ENCODE measurements at regions of chr3 and their contacts with region 1.

Region 1: GRCh38 chr3:112437146-112438022 is 61.9 kb downstream of the BTLA start:
- DNase-seq: peak; percentile 20
- H3K4me3 Mint-ChIP-seq: no peak overlapping the region
- H3K27ac Mint-ChIP-seq: peak overlapping the region; percentile 62
- H3K4me1 Mint-ChIP-seq: peaks cover 52% of the 10 kb centered on the region
- H3K27me3 Mint-ChIP-seq: no peaks in the 10 kb centered on the region

Region 2: DNA sequence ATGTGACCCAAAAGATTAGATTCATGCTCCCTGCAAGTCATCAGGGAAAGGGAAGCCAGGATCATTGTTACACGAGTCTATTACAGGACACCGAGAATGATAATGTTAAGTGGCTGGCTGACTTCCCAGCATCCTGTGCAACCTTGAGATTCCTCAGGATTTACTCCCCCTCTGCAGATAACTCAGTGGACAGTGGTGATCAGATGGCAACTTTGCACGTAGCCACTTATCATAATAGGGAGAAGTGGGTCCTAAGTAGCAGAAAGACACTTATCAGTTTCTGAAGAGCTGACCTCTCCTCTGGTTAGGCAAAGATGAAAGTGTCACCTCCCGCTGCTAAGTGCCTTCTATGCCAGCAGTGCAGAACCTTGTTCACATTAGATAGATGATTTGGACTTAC is 409.6 kb before region 1 on chr3:
- CTCF ChIA-PET with region 1: no interaction called
- intact Hi-C with region 1: no loop called
- DNase-seq: no peak
- H3K4me3 Mint-ChIP-seq: no peak overlapping the region
- H3K27ac Mint-ChIP-seq: no peak overlapping the region
- H3K4me1 Mint-ChIP-seq: no peaks in the 10 kb centered on the region
- H3K27me3 Mint-ChIP-seq: no peaks in the 10 kb centered on the region

Region 3: GRCh38 chr3:112111785-112112402 is 325.5 kb before region 1 on chr3:
- CTCF ChIA-PET with region 1: interaction called, 5 read pairs
- intact Hi-C with region 1: loop called (anchors 1 kb)
- DNase-seq: peak; percentile 79
- H3K4me3 Mint-ChIP-seq: no peak overlapping the region
- H3K27ac Mint-ChIP-seq: no peak overlapping the region
- H3K4me1 Mint-ChIP-seq: peaks cover 17% of the 10 kb centered on the region
- H3K27me3 Mint-ChIP-seq: peaks cover 3% of the 10 kb centered on the region

Region 4: GRCh38 chr3:112357930-112358780 is 79.2 kb before region 1 on chr3:
- CTCF ChIA-PET with region 1: interaction called, 4 read pairs
- intact Hi-C with region 1: loop called (anchors 1 kb)
- DNase-seq: peak; percentile 68
- H3K4me3 Mint-ChIP-seq: peak overlapping the region; percentile 58
- H3K27ac Mint-ChIP-seq: peak overlapping the region; percentile 87
- H3K4me1 Mint-ChIP-seq: peaks cover 43% of the 10 kb centered on the region
- H3K27me3 Mint-ChIP-seq: no peaks in the 10 kb centered on the region

Region 5: GRCh38 chr3:112405845-112406244 is 31.5 kb before region 1 on chr3:
- CTCF ChIA-PET with region 1: interaction called, 13 read pairs
- intact Hi-C with region 1: loop called (anchors 1 kb)
- DNase-seq: peak; percentile 75
- H3K4me3 Mint-ChIP-seq: no peak overlapping the region
- H3K27ac Mint-ChIP-seq: no peak overlapping the region
- H3K4me1 Mint-ChIP-seq: peaks cover 23% of the 10 kb centered on the region
- H3K27me3 Mint-ChIP-seq: no peaks in the 10 kb centered on the region

Region 6: DNA sequence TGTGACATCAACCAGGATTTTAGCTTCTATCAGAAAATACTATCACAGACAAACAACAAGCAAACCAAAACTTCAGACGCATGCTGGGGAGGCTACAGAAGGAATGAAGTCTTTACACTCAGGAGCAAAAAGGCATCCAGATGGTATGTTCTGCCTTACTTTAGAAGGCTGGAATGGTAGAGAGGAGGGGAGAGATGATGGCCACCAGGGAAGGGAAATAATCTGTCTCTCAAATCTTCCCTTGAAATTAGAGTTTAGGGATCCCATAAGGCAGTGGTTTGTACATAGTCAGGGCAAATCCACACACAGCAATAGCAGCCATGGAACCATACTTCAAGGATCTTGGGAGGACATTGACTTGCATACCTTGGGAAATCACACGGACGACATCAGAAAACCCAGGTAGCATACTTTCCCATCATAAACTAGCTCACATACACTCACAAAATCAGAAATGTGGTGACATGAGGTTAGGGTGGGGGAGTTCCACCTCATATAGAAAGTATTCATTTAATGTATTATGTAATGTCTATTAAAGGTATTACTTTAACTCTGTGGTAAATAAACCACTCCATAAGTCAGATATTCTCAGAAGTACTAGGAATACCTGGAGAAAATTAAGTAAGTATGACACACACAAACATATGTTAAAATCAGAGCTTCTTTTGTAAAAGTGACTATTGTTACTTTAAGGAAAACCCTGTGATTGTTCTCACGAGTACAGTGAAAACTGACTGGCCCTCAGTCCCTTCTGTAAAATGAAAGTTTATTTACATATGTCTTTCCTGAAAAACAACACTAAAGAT is 52.5 kb after region 1 on chr3:
- CTCF ChIA-PET with region 1: interaction called, 5 read pairs
- intact Hi-C with region 1: loop called (anchors 2 kb)
- DNase-seq: peak; percentile 56
- H3K4me3 Mint-ChIP-seq: peak overlapping the region; percentile 100
- H3K27ac Mint-ChIP-seq: peak overlapping the region; percentile 100
- H3K4me1 Mint-ChIP-seq: peaks cover 81% of the 10 kb centered on the region
- H3K27me3 Mint-ChIP-seq: no peaks in the 10 kb centered on the region

Region 7: GRCh38 chr3:112990672-112991602 is 553.6 kb after region 1 on chr3 and contains the start of gene GTPBP8:
- CTCF ChIA-PET with region 1: no interaction called
- intact Hi-C with region 1: no loop called
- DNase-seq: peak; percentile 94
- H3K4me3 Mint-ChIP-seq: peak within 1 kb of the TSS; percentile 94
- H3K27ac Mint-ChIP-seq: peak within 1 kb of the TSS; percentile 96
- H3K4me1 Mint-ChIP-seq: peaks cover 68% of the 10 kb centered on the region
- H3K27me3 Mint-ChIP-seq: no peaks in the 10 kb centered on the region
- total RNA-seq, gene GTPBP8: 62.8 to 68.9 TPM

Measured in activated naive CD4-positive, alpha-beta T cell treated with anti-CD3 and anti-CD28 coated beads for 36 hours (primary cell).